ENCODE measurements at regions of chr12 and their contacts with region 1.

Region 1: GRCh38 chr12:104381731-104382480 is 74.8 kb upstream of the CHST11 start:
- DNase-seq: peak; percentile 48 to 57
- ATAC-seq: peak; percentile 70 to 88
- H3K4me3 ChIP-seq: no peak overlapping the region
- H3K27ac ChIP-seq: no peak overlapping the region
- H3K4me1 ChIP-seq: no peaks in the 10 kb centered on the region
- H3K27me3 ChIP-seq: no peaks in the 10 kb centered on the region
- CTCF ChIP-seq: peak; percentile 86 to 93 (median 87)
- POLR2A ChIP-seq: no peak

Region 2: GRCh38 chr12:104877123-104877705 is 495.3 kb after region 1 on chr12:
- in situ Hi-C with region 1: loop called (anchors 5 to 10 kb)
- intact Hi-C with region 1: loop called (anchors 1 kb)
- DNase-seq: no peak
- ATAC-seq: peak in 1 of 2 donors; percentile 44
- H3K4me3 ChIP-seq: no peak overlapping the region
- H3K27ac ChIP-seq: no peak overlapping the region
- H3K4me1 ChIP-seq: no peaks in the 10 kb centered on the region
- H3K27me3 ChIP-seq: no peaks in the 10 kb centered on the region
- CTCF ChIP-seq: peak in 4 of 5 experiments; percentile 46 to 60 (median 52)
- POLR2A ChIP-seq: no peak

Region 3: GRCh38 chr12:105025890-105026289 is 644.0 kb after region 1 on chr12:
- in situ Hi-C with region 1: loop called in 1 of 4 experiments (anchors 25 kb)
- intact Hi-C with region 1: no loop called
- DNase-seq: peak in 1 of 2 donors; percentile 25
- ATAC-seq: peak in 1 of 2 donors; percentile 55
- H3K4me3 ChIP-seq: no peak overlapping the region
- H3K27ac ChIP-seq: no peak overlapping the region
- H3K4me1 ChIP-seq: peaks cover 0 to 16% of the 10 kb centered on the region in 2 donors
- H3K27me3 ChIP-seq: no peaks in the 10 kb centered on the region
- CTCF ChIP-seq: no peak
- POLR2A ChIP-seq: no peak

Region 4: DNA sequence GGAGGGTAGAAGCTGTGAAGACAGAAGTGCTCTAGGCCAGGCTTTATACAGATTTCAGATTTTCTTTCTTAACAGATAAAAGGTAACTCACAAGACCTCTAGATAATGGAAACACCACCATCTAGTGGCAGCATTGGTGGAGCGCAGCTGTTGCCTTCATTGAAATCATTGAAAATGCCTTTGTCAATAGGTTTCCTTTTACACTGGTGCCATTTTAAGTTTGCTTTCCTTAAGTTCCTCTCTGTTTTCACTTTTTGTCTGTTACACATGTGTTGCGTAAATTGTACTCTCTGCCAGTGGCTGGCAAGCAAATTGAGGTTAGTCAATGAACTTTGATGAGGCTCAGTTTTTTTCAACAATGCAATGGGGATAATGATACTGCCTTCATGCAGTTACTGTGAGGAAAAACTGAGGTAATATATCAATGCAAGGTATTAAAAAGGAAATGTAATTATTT is 671.2 kb after region 1 on chr12:
- in situ Hi-C with region 1: loop called (anchors 5 to 25 kb)
- intact Hi-C with region 1: loop called (anchors 2 kb)
- DNase-seq: peak; percentile 14 to 65
- ATAC-seq: peak; percentile 50 to 65
- H3K4me3 ChIP-seq: no peak overlapping the region
- H3K27ac ChIP-seq: no peak overlapping the region
- H3K4me1 ChIP-seq: no peaks in the 10 kb centered on the region
- H3K27me3 ChIP-seq: no peaks in the 10 kb centered on the region
- CTCF ChIP-seq: peak; percentile 57 to 88 (median 71)
- POLR2A ChIP-seq: no peak

Measured in gastrocnemius medialis (tissue), 4 donors.